ENCODE measurements at regions of chr16 and their contacts with region 1.

Region 1: GRCh38 chr16:8567750-8568617 is 22.3 kb downstream of the TMEM114 start:
- DNase-seq: peak; percentile 14
- H3K4me3 ChIP-seq: no peak overlapping the region
- H3K27ac ChIP-seq: no peak overlapping the region
- H3K4me1 ChIP-seq: peaks cover 0 to 15% (median 0%) of the 10 kb centered on the region in 3 donors
- H3K27me3 ChIP-seq: peaks cover 0 to 42% (median 0%) of the 10 kb centered on the region in 4 donors
- CTCF ChIP-seq: peak; percentile 95 to 99 (median 98)
- POLR2A ChIP-seq: no peak

Region 2: GRCh38 chr16:8505327-8505991 is 62.5 kb before region 1 on chr16:
- intact Hi-C with region 1: no loop called
- DNase-seq: no peak
- H3K4me3 ChIP-seq: no peak overlapping the region
- H3K27ac ChIP-seq: no peak overlapping the region
- H3K4me1 ChIP-seq: no peaks in the 10 kb centered on the region
- H3K27me3 ChIP-seq: peaks cover 0 to 7% (median 0%) of the 10 kb centered on the region in 4 donors
- CTCF ChIP-seq: no peak
- POLR2A ChIP-seq: no peak

Region 3: GRCh38 chr16:8655184-8655717 is 87.3 kb after region 1 on chr16:
- intact Hi-C with region 1: loop called (anchors 5 kb)
- DNase-seq: no peak
- H3K4me3 ChIP-seq: no peak overlapping the region
- H3K27ac ChIP-seq: no peak overlapping the region
- H3K4me1 ChIP-seq: no peaks in the 10 kb centered on the region
- H3K27me3 ChIP-seq: no peaks in the 10 kb centered on the region
- CTCF ChIP-seq: peak in 3 of 6 experiments; percentile 32 to 67 (median 36)
- POLR2A ChIP-seq: no peak

Region 4: GRCh38 chr16:8878521-8878911 is 310.5 kb after region 1 on chr16:
- intact Hi-C with region 1: loop called (anchors 5 kb)
- DNase-seq: no peak
- H3K4me3 ChIP-seq: no peak overlapping the region
- H3K27ac ChIP-seq: peak overlapping the region; percentile 42 to 73 (median 65)
- H3K4me1 ChIP-seq: peaks cover 9 to 26% (median 13%) of the 10 kb centered on the region in 3 donors
- H3K27me3 ChIP-seq: peaks cover 0 to 10% (median 0%) of the 10 kb centered on the region in 4 donors
- CTCF ChIP-seq: no peak
- POLR2A ChIP-seq: no peak

Measured in esophagus squamous epithelium (tissue), 5 donors.